Right ventricle myocardium inferior (tissue), 1 donor: ENCODE measurements at regions of chr19 and their contacts with region 1.

Region 1: DNA sequence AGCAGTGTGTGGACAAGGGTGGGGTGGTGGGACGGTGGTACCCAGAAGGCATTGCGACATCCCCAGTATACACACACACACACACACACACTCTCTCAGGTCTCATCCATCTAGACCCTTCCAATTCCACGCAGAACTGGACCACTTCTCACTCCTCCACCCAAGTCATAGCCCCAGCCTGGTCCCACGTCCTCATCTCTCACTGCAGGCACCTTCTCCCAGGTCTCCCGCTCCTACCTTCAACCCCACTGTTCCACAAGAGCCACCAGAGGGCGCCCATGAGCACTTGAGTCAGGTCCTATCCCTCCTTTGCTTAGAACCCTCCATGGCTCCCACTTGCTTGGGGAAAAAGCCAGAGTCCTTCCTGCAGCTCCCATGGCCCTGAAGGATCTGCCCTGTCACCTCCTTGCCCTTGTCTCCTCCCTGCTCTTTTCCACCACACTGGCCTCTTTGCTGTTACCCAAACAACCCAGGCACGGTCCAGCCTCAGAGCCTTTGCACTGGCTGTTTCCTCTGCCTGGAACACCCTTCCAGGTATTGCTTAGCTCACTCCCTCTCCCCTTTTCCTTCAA is 62.6 kb downstream of the IER2 start:
- DNase-seq: peak; percentile 86
- ATAC-seq: no peak

Region 2: DNA sequence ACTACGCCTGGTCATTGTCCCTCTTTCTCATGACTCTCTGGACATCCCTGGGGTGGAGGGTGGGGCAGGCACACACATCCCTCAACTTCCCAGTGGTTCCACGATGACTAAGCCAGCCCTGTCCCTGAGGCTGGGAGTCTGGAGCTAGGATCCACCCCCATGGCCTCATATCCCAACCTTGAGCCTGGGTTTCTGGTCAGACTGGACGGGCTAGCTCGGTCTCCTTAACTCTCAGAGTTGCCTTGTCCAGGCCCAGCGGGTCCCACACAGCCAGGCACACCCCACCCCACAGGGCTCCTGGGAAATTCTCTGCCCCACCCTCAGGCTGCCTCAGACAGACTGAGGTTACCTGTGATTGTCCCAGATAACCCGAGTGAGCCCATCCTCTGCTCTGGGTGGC is 43.0 kb before region 1 on chr19:
- intact Hi-C with region 1: loop called (anchors 2 kb)
- DNase-seq: no peak
- ATAC-seq: no peak

Region 3: GRCh38 chr19:13225973-13226865 is 13.4 kb after region 1 on chr19:
- intact Hi-C with region 1: no loop called
- DNase-seq: no peak
- ATAC-seq: no peak

Region 4: DNA sequence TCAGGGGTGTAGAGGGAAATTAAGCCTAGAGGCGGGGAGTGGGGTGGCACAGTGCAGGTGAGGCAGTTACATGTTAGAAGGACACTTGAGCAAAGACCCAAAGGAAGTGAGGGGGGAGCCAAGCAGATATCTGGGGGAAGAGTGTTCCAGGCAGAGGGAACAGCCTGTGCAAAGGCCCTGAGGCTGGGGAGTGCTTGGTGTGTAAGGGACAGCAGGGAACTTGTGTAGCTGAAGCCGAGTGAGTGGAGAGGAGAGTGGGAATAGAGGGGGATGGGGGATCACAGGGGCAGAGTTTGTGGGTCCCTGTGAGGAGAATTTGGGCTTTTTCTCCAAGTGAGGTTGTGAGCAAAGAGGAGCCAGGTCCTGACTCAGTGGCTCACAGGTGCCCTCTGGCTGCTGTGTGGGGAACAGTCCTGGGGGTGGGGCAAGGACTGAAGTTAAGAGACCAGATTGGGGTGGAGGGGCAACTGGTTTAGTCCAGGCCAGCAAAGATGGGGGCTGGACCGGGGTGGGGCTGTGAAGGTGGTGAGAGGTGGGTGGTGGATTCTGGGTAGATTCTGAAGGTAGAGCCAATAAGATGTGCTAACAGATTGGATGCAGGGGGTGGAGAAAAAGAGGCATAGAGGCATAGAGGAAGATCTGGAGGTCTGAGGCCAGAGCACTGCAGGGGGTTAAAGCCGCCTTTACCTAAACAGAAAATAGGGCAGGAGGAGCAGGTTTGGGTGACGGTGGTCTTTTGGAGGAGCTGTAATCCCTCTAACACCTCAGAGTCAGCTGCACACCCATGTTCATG is 218.1 kb after region 1 on chr19:
- intact Hi-C with region 1: no loop called
- DNase-seq: no peak
- ATAC-seq: peak; percentile 31